Vagina (tissue), 2 donors: ENCODE measurements at regions of chr15 and their contacts with region 1.

Region 1: DNA sequence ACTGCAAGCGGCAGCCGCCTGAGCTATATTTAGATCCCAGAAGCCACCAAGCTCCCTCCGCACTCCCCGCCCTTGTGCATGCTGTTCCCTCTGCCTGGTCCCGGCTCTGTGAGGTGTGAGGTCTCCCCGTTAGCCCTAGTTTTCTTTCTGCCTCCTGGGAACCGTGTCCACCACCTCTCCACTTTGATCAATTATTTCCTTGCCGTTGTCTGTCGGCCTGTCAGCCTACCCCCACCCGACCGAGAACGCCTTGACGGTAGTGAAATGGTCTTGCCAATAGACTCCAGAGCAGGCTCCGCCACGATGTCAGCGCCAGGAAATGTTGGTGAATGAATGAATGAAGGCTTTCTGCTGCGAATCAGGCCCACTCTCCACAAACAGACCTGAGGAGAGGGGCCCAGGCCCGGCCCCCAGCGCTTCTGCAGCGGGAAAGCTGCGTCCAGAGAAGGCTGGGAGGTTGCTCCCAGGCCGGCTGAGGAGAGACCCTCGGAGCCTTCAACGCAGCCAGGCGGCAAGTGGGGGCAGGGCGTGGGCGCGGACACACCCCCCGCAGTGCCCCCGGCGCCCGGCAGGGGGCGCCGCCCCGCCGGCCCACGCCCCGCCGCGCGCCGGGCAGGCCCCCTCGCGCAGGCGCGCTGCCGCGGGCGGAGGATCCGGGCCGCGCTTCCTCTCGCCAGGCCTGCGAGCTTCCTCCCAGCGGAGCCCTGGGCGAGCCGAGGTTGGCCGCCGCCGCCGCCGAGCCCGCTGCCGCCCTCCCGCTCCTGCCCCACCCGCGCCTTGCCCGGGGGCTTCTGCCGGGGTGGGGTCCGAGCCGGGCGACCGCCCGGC is at the start of gene CSK:
- DNase-seq: no peak
- H3K4me3 ChIP-seq: peak within 1 kb of the TSS; percentile 76 to 93
- H3K27ac ChIP-seq: peak within 1 kb of the TSS; percentile 79
- H3K4me1 ChIP-seq: peaks cover 71% of the 10 kb centered on the region
- H3K27me3 ChIP-seq: no peaks in the 10 kb centered on the region
- CTCF ChIP-seq: peak in 2 of 3 experiments; percentile 32 to 41
- POLR2A ChIP-seq: peak in 1 of 2 donors; percentile 43
- total RNA-seq, gene CSK: 26.3 TPM

Region 2: GRCh38 chr15:74373731-74374647 is 407.7 kb before region 1 on chr15:
- intact Hi-C with region 1: loop called (anchors 10 kb)
- DNase-seq: no peak
- H3K4me3 ChIP-seq: peak overlapping the region; percentile 55 to 71
- H3K27ac ChIP-seq: no peak overlapping the region
- H3K4me1 ChIP-seq: peaks cover 16% of the 10 kb centered on the region
- H3K27me3 ChIP-seq: no peaks in the 10 kb centered on the region
- CTCF ChIP-seq: peak; percentile 76 to 87 (median 84)
- POLR2A ChIP-seq: no peak

Region 3: GRCh38 chr15:74956648-74957300 is 175.1 kb after region 1 on chr15 and contains the start of gene RPP25:
- intact Hi-C with region 1: loop called (anchors 5 kb)
- DNase-seq: no peak
- H3K4me3 ChIP-seq: peak within 1 kb of the TSS; percentile 57 to 68
- H3K27ac ChIP-seq: peak within 1 kb of the TSS; percentile 81
- H3K4me1 ChIP-seq: peaks cover 47% of the 10 kb centered on the region
- H3K27me3 ChIP-seq: no peaks in the 10 kb centered on the region
- CTCF ChIP-seq: no peak
- POLR2A ChIP-seq: peak in 1 of 2 donors; percentile 67
- total RNA-seq, gene RPP25: 11.3 TPM